Posterior vena cava (tissue), 2 donors: ENCODE measurements at regions of chr15 and their contacts with region 1.

Region 1: DNA sequence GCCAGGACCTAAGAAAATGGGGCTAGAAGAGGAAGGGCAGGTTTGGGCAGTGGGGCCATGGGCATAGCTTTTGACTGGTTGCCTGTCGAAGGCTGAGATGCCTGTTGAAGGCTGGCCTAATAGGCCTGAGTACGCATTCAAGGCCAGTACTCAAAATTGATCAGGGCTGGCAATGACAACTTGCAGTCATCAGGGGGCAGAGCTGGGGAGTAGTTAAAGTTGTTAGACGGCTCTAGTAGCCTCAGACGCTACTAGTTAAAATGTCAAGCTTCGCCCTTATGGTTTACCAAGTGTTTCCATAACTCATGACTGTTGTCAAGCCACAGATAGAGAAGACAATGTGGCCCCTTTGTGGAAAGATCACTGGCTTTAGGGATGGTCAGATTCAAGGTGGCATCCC is 28.7 kb downstream of the SPG21 start:
- DNase-seq: no peak

Region 2: GRCh38 chr15:64989416-64990167 is 28.6 kb after region 1 on chr15 and contains the start of gene SPG21:
- intact Hi-C with region 1: loop called in 1 of 2 experiments (anchors 1 kb)
- DNase-seq: peak; percentile 98
- total RNA-seq, gene SPG21: 65.8 to 78.2 TPM

Region 3: GRCh38 chr15:65042776-65043327 is 81.8 kb after region 1 on chr15:
- intact Hi-C with region 1: no loop called
- DNase-seq: peak; percentile 4